ENCODE measurements at regions of chr13 and their contacts with region 1.

Region 1: GRCh38 chr13:32581177-32581786 is 5.0 kb upstream of the PDS5B start:
- DNase-seq: no peak
- ATAC-seq: no peak
- H3K4me3 Mint-ChIP-seq: no peak overlapping the region
- H3K27ac Mint-ChIP-seq: no peak overlapping the region
- H3K4me1 Mint-ChIP-seq: peaks cover 9% of the 10 kb centered on the region
- H3K27me3 Mint-ChIP-seq: peaks cover 6% of the 10 kb centered on the region

Region 2: GRCh38 chr13:31843044-31843443 is 738.2 kb before region 1 on chr13:
- CTCF ChIA-PET with region 1: no interaction called
- POLR2A ChIA-PET with region 1: no interaction called
- DNase-seq: no peak
- ATAC-seq: no peak
- H3K4me3 Mint-ChIP-seq: no peak overlapping the region
- H3K27ac Mint-ChIP-seq: no peak overlapping the region
- H3K4me1 Mint-ChIP-seq: peaks cover 13% of the 10 kb centered on the region
- H3K27me3 Mint-ChIP-seq: peaks cover 33% of the 10 kb centered on the region

Region 3: DNA sequence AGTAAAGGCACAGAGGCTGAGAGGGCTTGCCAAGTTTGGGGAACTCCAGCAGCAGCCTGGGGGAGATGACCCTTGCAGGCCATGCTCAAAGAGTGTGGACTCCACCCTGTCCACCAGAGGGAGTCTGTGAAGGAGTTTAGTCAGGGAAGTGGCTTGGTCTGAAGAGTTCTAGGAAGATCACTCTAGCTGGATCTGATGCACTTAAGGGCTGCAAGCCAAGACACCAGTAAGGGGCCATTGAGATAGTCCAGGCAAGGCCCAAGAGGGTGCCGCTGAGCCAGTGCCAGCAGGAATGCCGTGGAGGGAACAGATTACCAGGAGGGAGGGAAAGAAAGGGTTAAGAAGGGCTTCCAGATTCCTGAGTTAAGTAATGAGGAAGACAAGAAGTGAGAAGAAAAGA is 334.8 kb before region 1 on chr13:
- CTCF ChIA-PET with region 1: interaction called, 13 read pairs
- POLR2A ChIA-PET with region 1: no interaction called
- DNase-seq: peak; percentile 58
- ATAC-seq: peak; percentile 79
- H3K4me3 Mint-ChIP-seq: no peak overlapping the region
- H3K27ac Mint-ChIP-seq: no peak overlapping the region
- H3K4me1 Mint-ChIP-seq: peaks cover 7% of the 10 kb centered on the region
- H3K27me3 Mint-ChIP-seq: no peaks in the 10 kb centered on the region

Region 4: GRCh38 chr13:32381539-32381938 is 199.7 kb before region 1 on chr13:
- CTCF ChIA-PET with region 1: interaction called, 35 read pairs
- POLR2A ChIA-PET with region 1: no interaction called
- DNase-seq: peak; percentile 46
- ATAC-seq: peak; percentile 78
- H3K4me3 Mint-ChIP-seq: no peak overlapping the region
- H3K27ac Mint-ChIP-seq: no peak overlapping the region
- H3K4me1 Mint-ChIP-seq: no peaks in the 10 kb centered on the region
- H3K27me3 Mint-ChIP-seq: no peaks in the 10 kb centered on the region

Region 5: GRCh38 chr13:32468502-32469142 is 112.7 kb before region 1 on chr13:
- CTCF ChIA-PET with region 1: interaction called, 31 read pairs
- POLR2A ChIA-PET with region 1: no interaction called
- DNase-seq: no peak
- ATAC-seq: no peak
- H3K4me3 Mint-ChIP-seq: no peak overlapping the region
- H3K27ac Mint-ChIP-seq: no peak overlapping the region
- H3K4me1 Mint-ChIP-seq: no peaks in the 10 kb centered on the region
- H3K27me3 Mint-ChIP-seq: no peaks in the 10 kb centered on the region

Region 6: DNA sequence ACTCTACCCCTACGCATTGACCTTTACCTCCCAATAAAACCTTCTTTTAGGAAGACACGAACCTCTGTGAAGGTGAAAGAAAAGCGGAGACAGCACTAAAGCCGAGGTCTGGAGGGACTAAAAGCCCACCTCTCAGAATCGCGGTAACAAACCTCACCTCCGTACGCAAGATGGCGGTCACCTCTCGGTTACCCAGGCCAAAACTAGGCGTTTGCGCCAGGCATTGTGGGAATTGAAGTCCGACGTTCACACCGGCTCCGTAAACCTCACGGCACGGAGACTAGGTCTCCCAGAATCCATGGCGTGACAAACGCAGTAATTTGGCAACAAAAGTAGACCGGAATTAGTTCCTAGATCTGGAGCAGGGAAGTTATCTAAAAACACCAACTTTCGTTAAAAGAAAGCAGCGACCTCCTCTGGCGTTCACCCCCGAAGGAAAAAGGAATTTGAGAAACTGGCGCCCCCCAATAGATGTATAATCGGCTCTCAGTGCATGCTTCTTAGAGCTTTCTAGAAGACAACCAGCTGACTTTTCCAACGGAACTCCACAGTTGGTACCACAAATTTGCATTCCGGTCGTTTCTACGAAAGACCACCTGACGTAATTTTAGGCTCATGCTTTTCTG is 42.5 kb before region 1 on chr13 and contains the start of gene N4BP2L2:
- CTCF ChIA-PET with region 1: interaction called, 10 read pairs
- POLR2A ChIA-PET with region 1: interaction called, 3 read pairs
- DNase-seq: peak; percentile 95
- ATAC-seq: peak; percentile 98
- H3K4me3 Mint-ChIP-seq: peak within 1 kb of the TSS; percentile 97
- H3K27ac Mint-ChIP-seq: peak within 1 kb of the TSS; percentile 98
- H3K4me1 Mint-ChIP-seq: peaks cover 41% of the 10 kb centered on the region
- H3K27me3 Mint-ChIP-seq: no peaks in the 10 kb centered on the region
- total RNA-seq, gene N4BP2L2: 97.1 to 111 TPM

Region 7: DNA sequence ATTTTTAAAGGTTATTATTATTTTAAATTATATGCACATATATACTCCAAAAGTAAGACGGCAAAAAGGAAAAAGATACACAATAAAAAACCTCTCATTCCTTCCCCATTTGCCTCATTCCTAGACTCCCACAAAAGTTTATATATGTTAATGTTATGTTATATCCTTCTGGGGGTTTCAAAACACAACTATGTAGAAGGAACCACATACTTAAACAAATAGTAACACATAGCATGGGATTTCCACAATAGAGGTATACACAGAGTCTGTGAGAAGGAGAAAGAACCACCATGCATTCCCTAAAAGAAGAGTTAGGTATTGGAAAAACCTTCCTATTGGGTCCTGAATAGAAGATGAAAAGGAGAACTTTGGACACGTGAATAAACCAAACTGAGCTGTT is 14.0 kb after region 1 on chr13:
- CTCF ChIA-PET with region 1: interaction called, 11 read pairs
- POLR2A ChIA-PET with region 1: no interaction called
- DNase-seq: no peak
- ATAC-seq: no peak
- H3K4me3 Mint-ChIP-seq: no peak overlapping the region
- H3K27ac Mint-ChIP-seq: no peak overlapping the region
- H3K4me1 Mint-ChIP-seq: peaks cover 34% of the 10 kb centered on the region
- H3K27me3 Mint-ChIP-seq: no peaks in the 10 kb centered on the region

Region 8: GRCh38 chr13:32650705-32651311 is 69.5 kb after region 1 on chr13:
- CTCF ChIA-PET with region 1: interaction called, 19 read pairs
- POLR2A ChIA-PET with region 1: no interaction called
- DNase-seq: peak; percentile 72
- ATAC-seq: peak; percentile 80
- H3K4me3 Mint-ChIP-seq: no peak overlapping the region
- H3K27ac Mint-ChIP-seq: no peak overlapping the region
- H3K4me1 Mint-ChIP-seq: peaks cover 24% of the 10 kb centered on the region
- H3K27me3 Mint-ChIP-seq: no peaks in the 10 kb centered on the region